ENCODE measurements at regions of chr1 and their contacts with region 1.

Region 1: DNA sequence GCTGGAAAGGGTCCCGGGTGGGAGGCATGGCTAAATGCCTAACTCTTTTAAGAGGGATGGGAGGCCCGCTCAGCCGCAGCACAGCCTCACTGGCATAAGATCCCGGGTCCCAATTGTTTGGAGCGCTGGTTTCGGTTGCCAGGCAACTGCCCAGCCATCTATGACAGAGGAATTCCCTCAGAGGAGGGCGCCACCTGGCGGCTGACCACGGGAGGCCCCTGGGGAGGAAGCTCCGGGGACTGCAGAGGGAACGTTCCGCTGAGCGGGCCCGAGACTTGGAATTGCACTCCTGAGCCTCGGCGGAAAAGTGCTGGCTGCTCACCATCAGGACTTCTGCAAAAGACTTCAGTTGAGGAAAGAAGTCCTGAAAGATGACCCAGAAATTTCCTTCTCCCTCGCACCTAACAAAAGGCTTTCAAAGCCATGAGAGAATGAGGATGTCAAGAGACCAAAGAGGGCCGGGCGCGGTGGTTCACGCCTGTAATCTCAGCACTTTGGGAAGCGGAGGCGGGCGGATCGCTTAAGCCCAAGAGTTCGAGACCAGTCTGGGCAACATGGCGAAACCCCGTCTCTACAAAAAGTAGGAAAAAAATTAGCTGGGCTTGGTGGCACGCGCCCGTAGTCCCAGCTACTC is 1.1 kb upstream of the ELAPOR1 start:
- DNase-seq: peak; percentile 97
- ATAC-seq: peak; percentile 99

Region 2: DNA sequence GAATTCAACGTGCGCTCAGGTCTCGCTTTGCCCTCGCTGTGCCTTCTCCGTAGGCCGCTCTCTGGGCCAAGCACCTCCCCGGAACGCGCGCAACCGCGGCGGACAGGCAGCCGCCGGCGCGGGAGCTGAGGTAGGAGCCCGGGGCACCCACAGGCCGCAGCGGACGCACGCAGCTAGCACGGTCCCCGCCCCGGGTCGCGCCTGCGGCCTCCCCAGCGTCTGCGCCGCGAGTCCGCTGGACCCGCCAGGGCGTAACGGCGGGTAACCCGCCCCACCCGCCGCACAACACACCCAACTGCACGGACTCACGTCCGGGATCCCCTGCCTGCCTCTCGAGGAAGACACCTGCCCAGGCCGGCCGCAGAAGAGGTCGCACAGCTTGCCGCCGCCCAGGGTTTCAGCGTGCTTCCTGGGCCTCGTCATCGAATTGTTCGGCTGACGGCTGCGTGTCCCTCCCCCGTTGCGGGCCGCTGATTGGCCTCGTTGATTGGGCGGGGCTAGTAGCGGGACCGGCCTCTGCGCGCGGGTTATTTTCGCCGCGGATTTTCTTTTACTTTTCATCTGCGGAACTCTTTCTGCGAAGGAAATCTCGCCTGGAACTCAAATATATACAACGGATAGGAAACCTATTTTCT is 149.6 kb before region 1 on chr1 and contains the start of gene CLCC1:
- intact Hi-C with region 1: loop called (anchors 10 kb)
- DNase-seq: peak; percentile 95
- ATAC-seq: peak; percentile 99
- total RNA-seq, gene CLCC1: 28.2 TPM

Region 3: DNA sequence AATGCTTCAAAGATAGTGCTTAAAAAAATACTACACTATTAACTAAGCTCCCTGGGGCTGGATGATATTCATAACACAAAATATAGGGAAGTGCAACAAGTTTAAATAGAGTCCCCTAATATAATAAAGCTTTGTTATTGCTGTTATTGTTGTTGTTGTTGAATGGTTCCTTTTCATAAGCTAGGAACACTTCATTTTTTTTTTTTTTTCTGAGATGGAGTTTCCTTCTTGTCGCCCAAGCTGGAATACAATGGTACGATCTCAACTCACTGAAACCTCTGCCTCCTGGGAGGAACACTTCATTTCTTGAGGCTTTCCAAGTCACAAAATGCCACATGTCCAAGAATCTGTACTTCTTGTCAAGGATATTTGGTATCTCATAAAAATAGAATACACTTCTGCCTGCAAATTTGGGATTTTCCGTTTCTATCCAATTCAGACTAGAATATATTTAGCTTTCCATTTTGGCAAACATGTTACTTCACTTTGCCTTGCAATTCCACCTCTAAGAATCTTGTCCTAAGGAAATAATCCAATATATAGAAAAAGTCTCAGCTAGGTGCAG is 92.0 kb before region 1 on chr1:
- intact Hi-C with region 1: no loop called
- DNase-seq: no peak
- ATAC-seq: no peak